Adrenal gland (tissue), 19 donors: ENCODE measurements at regions of chr10 and their contacts with region 1.

Region 1: GRCh38 chr10:24724381-24725228 is 918 bp upstream of the ARHGAP21 start:
- DNase-seq: peak; percentile 98 to 99 (median 99)
- H3K4me3 ChIP-seq: peak overlapping the region; percentile 78 to 95 (median 92)
- H3K27ac ChIP-seq: peak overlapping the region; percentile 89 to 98 (median 96)
- H3K4me1 ChIP-seq: peaks cover 3 to 16% of the 10 kb centered on the region in 2 donors
- H3K27me3 ChIP-seq: no peaks in the 10 kb centered on the region
- CTCF ChIP-seq: peak in 1 of 6 experiments; percentile 17
- POLR2A ChIP-seq: peak; percentile 88 to 98

Region 2: GRCh38 chr10:24556750-24557742 is 167.6 kb before region 1 on chr10:
- intact Hi-C with region 1: no loop called
- DNase-seq: peak in 4 of 7 donors; percentile 30 to 61 (median 45)
- H3K4me3 ChIP-seq: no peak overlapping the region
- H3K27ac ChIP-seq: no peak overlapping the region
- H3K4me1 ChIP-seq: peaks cover 0 to 4% of the 10 kb centered on the region in 2 donors
- H3K27me3 ChIP-seq: no peaks in the 10 kb centered on the region
- CTCF ChIP-seq: peak; percentile 46 to 72 (median 69)
- POLR2A ChIP-seq: no peak

Region 3: GRCh38 chr10:24642622-24643417 is 81.8 kb before region 1 on chr10:
- intact Hi-C with region 1: loop called in 1 of 2 experiments (anchors 5 kb)
- DNase-seq: no peak
- H3K4me3 ChIP-seq: no peak overlapping the region
- H3K27ac ChIP-seq: no peak overlapping the region
- H3K4me1 ChIP-seq: peaks cover 17 to 30% of the 10 kb centered on the region in 2 donors
- H3K27me3 ChIP-seq: no peaks in the 10 kb centered on the region
- CTCF ChIP-seq: peak; percentile 65 to 84 (median 83)
- POLR2A ChIP-seq: no peak

Region 4: GRCh38 chr10:24952707-24953645 is 228.4 kb after region 1 on chr10:
- intact Hi-C with region 1: loop called in 1 of 2 experiments (anchors 10 kb)
- DNase-seq: peak; percentile 55 to 74 (median 63)
- H3K4me3 ChIP-seq: peak overlapping the region in 2 of 4 donors; percentile 52 to 81
- H3K27ac ChIP-seq: peak overlapping the region in 4 of 5 donors; percentile 64 to 94 (median 88)
- H3K4me1 ChIP-seq: peaks cover 14 to 26% of the 10 kb centered on the region in 2 donors
- H3K27me3 ChIP-seq: no peaks in the 10 kb centered on the region
- CTCF ChIP-seq: peak in 3 of 6 experiments; percentile 50 to 62 (median 50)
- POLR2A ChIP-seq: peak in 1 of 2 donors; percentile 11